ENCODE measurements at regions of chr2 and their contacts with region 1.

Region 1: GRCh38 chr2:217118559-217119284 is 258.9 kb upstream of the TNP1 start:
- DNase-seq: no peak
- ATAC-seq: no peak
- H3K4me3 ChIP-seq: no peak overlapping the region
- H3K4me3 Mint-ChIP-seq: no peak overlapping the region
- H3K27ac ChIP-seq: no peak overlapping the region
- H3K27ac Mint-ChIP-seq: no peak overlapping the region
- H3K4me1 ChIP-seq: no peaks in the 10 kb centered on the region
- H3K4me1 Mint-ChIP-seq: no peaks in the 10 kb centered on the region
- H3K27me3 ChIP-seq: no peaks in the 10 kb centered on the region
- H3K27me3 Mint-ChIP-seq: peaks cover 5% of the 10 kb centered on the region
- CTCF ChIP-seq: no peak

Region 2: DNA sequence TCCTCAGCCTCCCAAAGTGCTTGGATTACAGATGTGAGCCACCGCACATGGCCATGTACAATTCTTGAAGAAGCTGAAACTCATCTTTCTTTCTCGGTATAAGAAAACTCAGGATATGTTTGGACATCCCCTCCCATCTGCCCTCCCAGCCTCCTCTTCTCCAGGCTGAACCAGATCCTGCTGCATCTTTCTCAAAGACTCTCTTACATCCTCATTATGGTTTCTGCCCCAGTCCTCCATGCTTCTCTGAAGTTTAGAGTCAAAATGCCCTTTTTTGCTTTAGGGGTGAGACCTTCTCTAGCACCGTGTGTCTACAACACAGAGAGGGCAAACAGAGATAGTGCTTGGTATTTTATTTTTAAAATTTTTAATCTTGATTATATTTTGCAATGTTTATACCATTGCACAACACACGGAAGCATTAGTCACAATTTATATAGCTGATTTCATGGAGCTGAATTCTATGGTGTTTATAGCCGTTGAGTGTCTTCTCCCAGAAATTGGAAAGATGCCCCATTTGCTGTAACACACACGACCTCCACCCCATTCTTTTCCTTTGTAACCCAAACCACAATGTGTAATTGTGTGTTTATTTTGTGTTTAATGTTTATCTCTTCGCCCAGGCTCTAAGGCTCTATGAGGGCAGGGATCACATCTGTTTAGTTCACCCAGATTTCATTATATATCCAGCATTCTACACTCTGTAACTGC is 52.9 kb before region 1 on chr2:
- CTCF ChIA-PET with region 1: no interaction called
- POLR2A ChIA-PET with region 1: no interaction called
- intact Hi-C with region 1: loop called in 1 of 2 experiments (anchors 2 kb)
- DNase-seq: no peak
- ATAC-seq: no peak
- H3K4me3 ChIP-seq: no peak overlapping the region
- H3K4me3 Mint-ChIP-seq: no peak overlapping the region
- H3K27ac ChIP-seq: no peak overlapping the region
- H3K27ac Mint-ChIP-seq: no peak overlapping the region
- H3K4me1 ChIP-seq: no peaks in the 10 kb centered on the region
- H3K4me1 Mint-ChIP-seq: no peaks in the 10 kb centered on the region
- H3K27me3 ChIP-seq: peaks cover 0 to 3% of the 10 kb centered on the region in 2 experiments
- H3K27me3 Mint-ChIP-seq: peaks cover 6% of the 10 kb centered on the region
- CTCF ChIP-seq: no peak